Activated B cell treated with CpG ODN at 0.5 μM for 24 hours (primary cell): ENCODE measurements at regions of chr16 and their contacts with region 1.

Region 1: DNA sequence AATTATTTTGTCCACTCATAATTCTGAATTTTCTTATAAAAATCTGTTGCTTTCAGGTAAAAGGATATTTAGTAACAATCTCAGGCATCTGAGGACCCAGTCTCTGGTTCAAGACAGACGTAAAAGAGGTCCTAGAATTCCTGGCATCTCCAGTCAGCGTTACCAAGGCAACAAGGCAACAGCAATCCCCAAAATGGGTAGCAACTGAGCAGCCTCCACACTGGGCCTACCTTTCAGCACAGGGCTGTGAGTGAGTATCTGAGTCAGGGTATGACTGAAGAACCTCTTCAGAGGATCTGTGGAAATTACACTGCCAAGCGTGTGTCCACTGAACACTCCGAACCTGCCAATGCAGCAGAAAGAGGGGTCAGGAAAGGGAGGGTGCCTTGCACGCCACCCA is 20.8 kb downstream of the FANCA start:
- DNase-seq: no peak
- ATAC-seq: no peak
- H3K4me3 Mint-ChIP-seq: no peak overlapping the region
- H3K27ac Mint-ChIP-seq: no peak overlapping the region
- H3K4me1 Mint-ChIP-seq: peaks cover 2% of the 10 kb centered on the region
- H3K27me3 Mint-ChIP-seq: no peaks in the 10 kb centered on the region
- CTCF ChIP-seq: no peak

Region 2: GRCh38 chr16:89545831-89546574 is 249.7 kb before region 1 on chr16:
- CTCF ChIA-PET with region 1: no interaction called
- POLR2A ChIA-PET with region 1: no interaction called
- intact Hi-C with region 1: no loop called
- DNase-seq: no peak
- ATAC-seq: no peak
- H3K4me3 Mint-ChIP-seq: no peak overlapping the region
- H3K27ac Mint-ChIP-seq: no peak overlapping the region
- H3K4me1 Mint-ChIP-seq: peaks cover 5% of the 10 kb centered on the region
- H3K27me3 Mint-ChIP-seq: no peaks in the 10 kb centered on the region
- CTCF ChIP-seq: no peak

Region 3: DNA sequence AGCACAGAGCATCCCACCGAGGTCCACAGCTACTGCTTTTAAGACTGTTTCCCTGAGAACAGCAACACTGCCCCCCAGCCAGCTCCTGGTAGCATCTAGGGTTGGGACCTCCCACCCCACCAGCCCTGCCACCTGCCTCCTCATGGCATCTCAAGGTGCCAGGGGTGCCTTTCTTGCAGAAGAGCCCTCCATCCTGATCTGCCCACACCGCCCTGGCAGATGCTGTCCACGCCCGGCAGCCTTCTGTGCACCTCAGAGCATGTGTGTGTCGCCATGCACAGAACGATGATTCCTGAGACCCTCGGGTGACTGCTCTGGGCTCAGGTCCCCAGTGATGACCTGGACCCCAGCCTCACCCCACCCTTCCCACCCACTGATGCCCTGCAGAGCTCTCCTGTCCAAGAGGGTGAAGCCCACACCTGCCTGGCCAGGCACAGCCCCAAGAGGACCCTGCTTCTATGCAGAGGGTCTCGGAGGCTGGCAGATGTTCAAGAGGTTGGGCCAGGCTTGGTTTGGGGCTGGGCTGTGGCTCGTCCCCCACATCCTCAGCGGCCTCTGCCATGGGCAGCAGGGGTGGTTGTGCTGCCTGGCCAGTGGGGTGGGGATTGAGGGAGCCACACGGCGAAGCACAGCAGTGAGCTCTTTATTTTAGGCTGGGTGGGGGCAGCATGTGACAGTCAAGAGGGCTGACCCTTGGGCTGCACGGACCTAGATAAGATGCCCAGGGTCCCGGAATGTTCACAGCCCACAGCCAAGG is 89.0 kb before region 1 on chr16:
- CTCF ChIA-PET with region 1: interaction called, 102 read pairs
- POLR2A ChIA-PET with region 1: interaction called, 9 read pairs
- intact Hi-C with region 1: loop called (anchors 1 kb)
- DNase-seq: no peak
- ATAC-seq: no peak
- H3K4me3 Mint-ChIP-seq: no peak overlapping the region
- H3K27ac Mint-ChIP-seq: no peak overlapping the region
- H3K4me1 Mint-ChIP-seq: peaks cover 15% of the 10 kb centered on the region
- H3K27me3 Mint-ChIP-seq: no peaks in the 10 kb centered on the region
- CTCF ChIP-seq: no peak

Region 4: DNA sequence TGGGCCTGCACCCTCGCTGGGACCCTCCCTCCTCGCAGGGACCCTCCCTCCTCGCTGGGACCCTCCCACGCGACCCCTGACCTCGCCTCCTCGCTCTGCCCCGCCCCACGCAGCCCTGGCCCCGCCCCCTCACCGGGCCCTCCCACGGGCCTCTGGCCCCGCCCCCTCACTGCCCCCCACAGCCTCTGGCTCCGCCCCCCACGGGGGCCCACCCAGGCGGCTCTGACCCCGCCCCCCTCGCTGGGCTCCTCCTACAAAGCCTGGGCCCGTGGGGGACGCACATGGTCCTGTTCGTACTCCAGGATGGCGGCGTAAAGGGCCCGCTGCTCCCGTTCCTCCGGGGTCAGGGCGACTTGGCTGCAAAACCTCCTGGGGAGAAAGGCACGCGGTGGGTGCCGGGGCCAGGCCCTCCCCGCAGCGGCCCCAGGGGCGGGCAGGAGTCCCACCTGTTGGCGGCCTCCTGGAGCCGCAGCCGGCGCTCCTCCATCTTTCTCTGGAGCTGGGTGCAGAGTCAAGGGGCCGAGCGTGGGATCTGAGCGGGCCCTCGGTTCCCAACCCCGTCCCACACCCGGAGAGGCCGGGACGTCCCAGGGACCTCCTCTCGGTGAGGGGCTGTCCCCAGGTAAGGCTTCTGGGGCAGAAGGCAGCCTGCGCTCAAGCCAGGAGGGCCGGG is 83.9 kb before region 1 on chr16:
- CTCF ChIA-PET with region 1: interaction called, 102 read pairs
- POLR2A ChIA-PET with region 1: no interaction called
- intact Hi-C with region 1: loop called (anchors 1 kb)
- DNase-seq: peak; percentile 76
- ATAC-seq: peak; percentile 96
- H3K4me3 Mint-ChIP-seq: peak overlapping the region; percentile 76
- H3K27ac Mint-ChIP-seq: no peak overlapping the region
- H3K4me1 Mint-ChIP-seq: peaks cover 2% of the 10 kb centered on the region
- H3K27me3 Mint-ChIP-seq: no peaks in the 10 kb centered on the region
- CTCF ChIP-seq: no peak

Region 5: GRCh38 chr16:89720813-89721545 is 74.7 kb before region 1 on chr16 and contains the starts of genes VPS9D1 and ZNF276:
- CTCF ChIA-PET with region 1: no interaction called
- POLR2A ChIA-PET with region 1: no interaction called
- intact Hi-C with region 1: loop called (anchors 1 kb)
- DNase-seq: peak; percentile 81
- ATAC-seq: peak; percentile 74
- H3K4me3 Mint-ChIP-seq: peak within 1 kb of the TSS; percentile 85
- H3K27ac Mint-ChIP-seq: peak within 1 kb of the TSS; percentile 85
- H3K4me1 Mint-ChIP-seq: peaks cover 35% of the 10 kb centered on the region
- H3K27me3 Mint-ChIP-seq: no peaks in the 10 kb centered on the region
- CTCF ChIP-seq: no peak
- total RNA-seq, gene VPS9D1: 6.6 and 7.4 TPM in 2 replicates
- total RNA-seq, gene ZNF276: 43.8 and 52.0 TPM in 2 replicates

Region 6: GRCh38 chr16:89749647-89750046 is 46.0 kb before region 1 on chr16:
- CTCF ChIA-PET with region 1: interaction called, 6 read pairs
- POLR2A ChIA-PET with region 1: no interaction called
- intact Hi-C with region 1: loop called (anchors 2 kb)
- DNase-seq: no peak
- ATAC-seq: no peak
- H3K4me3 Mint-ChIP-seq: no peak overlapping the region
- H3K27ac Mint-ChIP-seq: no peak overlapping the region
- H3K4me1 Mint-ChIP-seq: peaks cover 8% of the 10 kb centered on the region
- H3K27me3 Mint-ChIP-seq: no peaks in the 10 kb centered on the region
- CTCF ChIP-seq: no peak

Region 7: DNA sequence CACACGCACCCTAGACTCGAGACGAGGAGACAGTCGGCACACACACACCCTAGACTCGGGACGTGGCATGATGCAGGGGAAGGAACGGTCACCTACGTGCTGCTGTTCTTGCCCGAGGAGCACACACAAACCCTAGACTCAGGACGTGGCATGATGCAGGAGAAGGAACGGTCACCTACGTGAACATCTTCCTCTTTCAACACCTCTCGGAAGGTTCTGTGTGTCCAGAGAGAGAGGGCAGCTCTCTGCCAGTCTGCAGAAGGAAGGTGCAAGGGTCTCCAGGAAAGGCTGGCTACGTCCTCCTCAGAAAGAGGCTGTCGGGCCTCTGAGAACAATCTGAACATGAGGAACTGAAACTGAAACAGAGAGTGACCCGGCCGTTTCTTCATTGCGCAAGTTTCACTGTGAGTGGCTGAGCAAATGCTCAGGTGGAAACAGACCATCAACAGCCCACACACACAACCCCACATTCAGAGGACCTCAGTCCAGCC is 30.9 kb before region 1 on chr16:
- CTCF ChIA-PET with region 1: interaction called, 4 read pairs
- POLR2A ChIA-PET with region 1: no interaction called
- intact Hi-C with region 1: loop called (anchors 1 kb)
- DNase-seq: peak; percentile 62
- ATAC-seq: peak; percentile 83
- H3K4me3 Mint-ChIP-seq: peak overlapping the region; percentile 88
- H3K27ac Mint-ChIP-seq: peak overlapping the region; percentile 95
- H3K4me1 Mint-ChIP-seq: peaks cover 69% of the 10 kb centered on the region
- H3K27me3 Mint-ChIP-seq: no peaks in the 10 kb centered on the region
- CTCF ChIP-seq: no peak

Region 8: DNA sequence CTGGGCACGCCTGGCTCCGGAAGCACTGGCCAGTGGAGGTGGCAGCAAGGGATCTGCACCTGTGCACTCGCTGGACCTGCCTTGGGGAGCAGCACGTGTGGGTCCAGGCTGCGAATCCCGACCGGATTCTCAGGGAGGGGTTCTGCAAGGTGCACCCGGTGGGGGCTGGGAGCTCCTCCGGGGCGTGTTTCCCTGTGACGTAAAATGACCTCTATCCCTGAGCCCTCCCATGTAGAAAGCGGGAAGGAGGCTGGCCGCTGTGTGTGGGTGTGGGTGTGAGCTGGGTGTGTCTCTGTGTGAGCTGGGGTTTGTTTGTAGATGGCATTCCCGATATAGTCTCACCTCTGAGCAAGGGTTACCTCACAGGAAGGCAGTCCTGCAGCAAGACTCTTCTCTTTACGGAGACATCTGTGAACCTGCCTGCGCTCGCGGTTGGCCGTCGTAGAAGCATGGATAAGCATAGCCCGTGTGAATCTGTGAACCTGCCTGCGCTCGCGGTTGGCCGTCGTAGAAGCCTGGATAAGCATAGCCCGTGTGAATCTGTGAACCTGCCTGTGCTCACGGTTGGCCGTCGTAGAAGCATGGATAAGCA is 38.1 kb after region 1 on chr16:
- CTCF ChIA-PET with region 1: no interaction called
- POLR2A ChIA-PET with region 1: no interaction called
- intact Hi-C with region 1: no loop called
- DNase-seq: no peak
- ATAC-seq: no peak
- H3K4me3 Mint-ChIP-seq: no peak overlapping the region
- H3K27ac Mint-ChIP-seq: no peak overlapping the region
- H3K4me1 Mint-ChIP-seq: peaks cover 11% of the 10 kb centered on the region
- H3K27me3 Mint-ChIP-seq: peaks cover 22% of the 10 kb centered on the region
- CTCF ChIP-seq: no peak